ENCODE measurements at regions of chr12 and their contacts with region 1.

Region 1: GRCh38 chr12:106136263-106136662 is 2.5 kb downstream of the NUAK1 start:
- DNase-seq: peak; percentile 85 to 99 (median 95)

Region 2: GRCh38 chr12:105420659-105421240 is 715.5 kb before region 1 on chr12:
- intact Hi-C with region 1: loop called (anchors 1 kb)
- DNase-seq: peak in 9 of 10 donors; percentile 48 to 96 (median 78)

Region 3: GRCh38 chr12:105705765-105706164 is 430.5 kb before region 1 on chr12:
- intact Hi-C with region 1: loop called (anchors 2 kb)
- DNase-seq: peak in 6 of 10 donors; percentile 34 to 81 (median 62)

Region 4: DNA sequence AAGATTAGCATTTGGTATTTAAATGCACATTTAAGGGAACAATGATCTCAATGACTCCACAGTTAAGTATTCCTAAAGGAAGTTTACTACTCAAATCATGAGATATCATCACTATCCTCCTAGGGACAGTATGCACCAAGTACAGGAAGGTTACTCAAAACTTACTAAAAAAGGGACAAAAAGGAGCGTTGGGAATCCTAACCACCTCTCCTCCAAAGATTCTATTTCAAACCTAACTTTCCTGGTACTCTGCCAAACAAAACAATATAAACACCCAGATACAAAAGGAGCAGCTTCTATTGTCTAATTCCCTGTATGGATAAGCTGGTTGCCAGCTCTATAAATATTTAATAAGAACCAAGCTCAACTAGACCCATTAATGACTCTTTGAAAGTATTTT is 375.2 kb before region 1 on chr12:
- intact Hi-C with region 1: loop called (anchors 10 kb)
- DNase-seq: no peak

Region 5: DNA sequence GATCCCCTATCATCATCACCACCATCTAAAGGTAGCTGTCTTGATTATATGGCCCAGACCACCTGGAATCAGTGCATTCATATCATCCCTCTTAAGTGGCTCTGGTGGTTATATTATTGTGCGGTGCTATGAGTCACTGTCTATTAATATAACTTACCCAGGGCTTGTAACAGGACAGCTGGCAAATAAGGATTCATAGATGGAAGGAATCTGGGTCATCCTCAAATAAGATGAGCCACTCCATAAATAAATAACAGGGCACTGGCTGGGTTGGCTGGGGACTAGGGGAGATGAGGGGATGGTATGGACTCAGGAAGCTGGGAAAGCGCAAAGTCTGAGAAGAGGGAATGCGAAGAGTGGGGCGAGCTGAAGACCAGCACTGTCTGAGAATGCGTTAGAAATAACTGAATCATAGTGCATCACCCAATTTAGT is 213.6 kb before region 1 on chr12:
- intact Hi-C with region 1: loop called (anchors 10 kb)
- DNase-seq: no peak

Region 6: GRCh38 chr12:106096376-106096775 is 39.9 kb before region 1 on chr12:
- intact Hi-C with region 1: loop called (anchors 5 kb)
- DNase-seq: no peak

Region 7: DNA sequence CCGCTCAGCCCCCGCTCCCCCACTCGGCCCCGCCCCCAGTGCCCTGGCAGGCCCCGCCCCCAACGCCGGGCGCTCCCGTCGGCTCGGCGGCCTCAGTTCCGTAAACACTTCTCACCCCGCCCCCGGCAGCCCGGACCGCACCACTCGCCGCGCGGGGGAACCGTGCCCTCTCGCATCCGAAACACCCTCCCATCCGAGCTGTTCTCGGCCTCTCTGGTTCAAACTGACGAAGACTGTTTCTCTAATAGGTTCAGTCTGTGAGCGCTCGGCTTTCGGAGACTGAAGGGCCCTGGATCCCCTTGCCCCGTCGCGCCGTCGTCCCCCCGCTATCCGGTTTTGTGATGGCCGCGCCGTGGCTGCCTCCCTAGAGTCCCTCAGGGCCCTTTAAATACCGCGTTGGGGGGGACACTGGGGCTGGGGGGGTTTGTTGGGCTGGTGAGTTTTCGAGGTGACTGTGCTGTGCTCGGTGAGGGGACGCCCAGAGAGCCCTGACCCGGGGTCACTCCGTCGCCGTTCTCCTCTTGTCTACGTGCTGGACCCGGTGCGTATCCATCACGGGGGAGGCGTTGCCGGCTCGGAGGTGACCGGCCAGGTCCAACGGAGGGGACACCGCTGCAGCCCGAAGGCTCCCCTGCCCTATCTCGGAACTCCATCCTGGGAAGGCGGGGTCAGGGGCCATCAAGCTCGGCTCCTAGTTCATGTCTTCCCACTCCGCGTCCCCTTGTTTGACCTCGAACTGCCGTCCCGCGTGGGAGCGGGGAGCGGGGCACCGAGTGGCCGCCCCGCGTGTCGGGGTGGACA is 166.3 kb after region 1 on chr12 and contains the start of gene TCP11L2:
- intact Hi-C with region 1: loop called (anchors 10 kb)
- DNase-seq: peak; percentile 79 to 98 (median 88)

Measured in posterior cingulate gyrus (tissue), 11 donors.